ENCODE measurements at regions of chr22 and their contacts with region 1.

Region 1: GRCh38 chr22:30634471-30635233 is 929 bp upstream of the SLC35E4 start:
- DNase-seq: peak; percentile 92
- H3K4me3 Mint-ChIP-seq: peak overlapping the region; percentile 83
- H3K27ac Mint-ChIP-seq: peak overlapping the region; percentile 88
- H3K4me1 Mint-ChIP-seq: peaks cover 33% of the 10 kb centered on the region
- H3K27me3 Mint-ChIP-seq: no peaks in the 10 kb centered on the region

Region 2: GRCh38 chr22:30606455-30607299 is 28.0 kb before region 1 on chr22 and contains the start of gene TCN2:
- CTCF ChIA-PET with region 1: interaction called, 18 read pairs
- POLR2A ChIA-PET with region 1: interaction called, 13 read pairs
- DNase-seq: peak; percentile 65
- H3K4me3 Mint-ChIP-seq: peak within 1 kb of the TSS; percentile 74
- H3K27ac Mint-ChIP-seq: peak within 1 kb of the TSS; percentile 62
- H3K4me1 Mint-ChIP-seq: peaks cover 52% of the 10 kb centered on the region
- H3K27me3 Mint-ChIP-seq: peaks cover 1% of the 10 kb centered on the region
- total RNA-seq, gene TCN2: 1.7 to 1.9 TPM

Region 3: GRCh38 chr22:30649430-30650007 is 14.9 kb after region 1 on chr22:
- CTCF ChIA-PET with region 1: interaction called, 43 read pairs
- POLR2A ChIA-PET with region 1: interaction called, 69 read pairs
- DNase-seq: peak; percentile 88
- H3K4me3 Mint-ChIP-seq: no peak overlapping the region
- H3K27ac Mint-ChIP-seq: peak overlapping the region; percentile 90
- H3K4me1 Mint-ChIP-seq: peaks cover 52% of the 10 kb centered on the region
- H3K27me3 Mint-ChIP-seq: no peaks in the 10 kb centered on the region

Region 4: GRCh38 chr22:30742291-30743256 is 107.9 kb after region 1 on chr22:
- CTCF ChIA-PET with region 1: interaction called, 30 read pairs
- POLR2A ChIA-PET with region 1: interaction called, 31 read pairs
- DNase-seq: peak; percentile 50
- H3K4me3 Mint-ChIP-seq: peak overlapping the region; percentile 21
- H3K27ac Mint-ChIP-seq: peak overlapping the region; percentile 90
- H3K4me1 Mint-ChIP-seq: peaks cover 83% of the 10 kb centered on the region
- H3K27me3 Mint-ChIP-seq: no peaks in the 10 kb centered on the region

Region 5: DNA sequence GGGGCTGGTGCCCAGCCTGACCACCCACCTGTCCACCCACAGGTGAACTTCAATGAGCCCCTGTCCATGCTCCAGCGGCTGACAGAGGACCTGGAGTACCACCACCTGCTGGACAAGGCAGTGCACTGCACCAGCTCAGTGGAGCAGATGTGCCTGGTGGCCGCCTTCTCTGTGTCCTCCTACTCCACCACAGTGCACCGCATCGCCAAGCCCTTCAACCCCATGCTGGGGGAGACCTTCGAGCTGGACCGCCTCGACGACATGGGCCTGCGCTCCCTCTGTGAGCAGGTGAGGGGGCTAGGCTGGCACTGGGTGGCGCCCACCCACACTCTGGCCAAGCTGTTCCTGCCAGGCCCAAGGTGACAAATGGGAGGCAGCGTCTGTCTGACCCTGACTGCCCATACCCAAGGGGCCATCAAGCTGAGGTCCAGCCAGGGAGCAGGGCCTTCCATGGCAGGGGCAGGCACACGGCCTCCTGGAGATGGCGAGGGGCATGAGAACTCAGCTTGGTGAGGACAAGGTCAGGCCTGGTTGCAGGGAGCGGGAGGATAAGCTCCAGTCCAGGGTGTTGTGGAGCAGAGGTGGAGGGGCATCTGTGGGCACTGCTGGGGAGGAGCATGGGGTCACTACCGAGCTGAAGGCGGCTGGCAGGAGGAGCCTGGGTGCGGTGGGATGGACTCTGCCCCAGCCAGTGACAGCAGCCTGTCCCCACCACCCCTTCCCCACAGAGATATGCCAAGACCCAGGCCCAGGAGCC is 256.2 kb after region 1 on chr22:
- CTCF ChIA-PET with region 1: interaction called, 10 read pairs
- POLR2A ChIA-PET with region 1: interaction called, 4 read pairs
- DNase-seq: peak; percentile 42
- H3K4me3 Mint-ChIP-seq: no peak overlapping the region
- H3K27ac Mint-ChIP-seq: no peak overlapping the region
- H3K4me1 Mint-ChIP-seq: peaks cover 11% of the 10 kb centered on the region
- H3K27me3 Mint-ChIP-seq: no peaks in the 10 kb centered on the region

Region 6: GRCh38 chr22:30968924-30969539 is 334.4 kb after region 1 on chr22 and contains the start of gene TUG1:
- CTCF ChIA-PET with region 1: interaction called, 7 read pairs
- POLR2A ChIA-PET with region 1: interaction called, 13 read pairs
- DNase-seq: peak; percentile 98
- H3K4me3 Mint-ChIP-seq: peak within 1 kb of the TSS; percentile 95
- H3K27ac Mint-ChIP-seq: peak within 1 kb of the TSS; percentile 94
- H3K4me1 Mint-ChIP-seq: peaks cover 65% of the 10 kb centered on the region
- H3K27me3 Mint-ChIP-seq: no peaks in the 10 kb centered on the region
- total RNA-seq, gene TUG1: 71.2 to 72.5 TPM